ENCODE measurements at regions of chr20 and their contacts with region 1.

Region 1: GRCh38 chr20:53939572-53940359 is 130.6 kb downstream of the BCAS1 start:
- DNase-seq: peak; percentile 92
- H3K27ac ChIP-seq: no peak overlapping the region
- CTCF ChIP-seq: peak; percentile 96

Region 2: DNA sequence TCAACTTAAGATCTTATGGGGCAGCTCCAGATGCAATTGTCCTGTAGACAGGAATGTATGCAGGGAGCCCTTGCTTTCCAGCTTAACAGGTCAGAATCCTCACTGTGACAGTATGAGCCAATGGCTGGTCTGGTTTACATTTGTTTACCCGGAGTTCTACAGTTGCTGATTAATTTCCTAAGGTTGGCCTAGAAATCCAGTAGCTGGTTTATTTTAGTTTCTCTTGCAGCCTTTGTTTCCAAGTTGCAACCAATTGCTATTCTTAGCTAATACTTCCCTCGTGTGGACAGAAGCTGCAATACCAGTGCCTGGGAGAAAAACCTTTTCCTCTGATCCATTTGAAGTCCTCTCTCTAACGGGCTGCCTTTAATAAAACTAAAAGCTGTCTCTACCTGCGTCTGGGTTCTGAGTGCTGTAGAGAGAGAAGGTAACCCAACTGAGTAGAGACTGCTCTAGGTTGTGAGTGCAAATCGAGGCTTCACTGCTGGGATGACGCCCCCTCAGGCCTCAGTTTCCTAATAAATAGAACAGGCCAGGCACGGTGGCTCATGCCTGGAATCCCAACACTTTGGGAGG is 392.0 kb before region 1 on chr20:
- CTCF ChIA-PET with region 1: interaction called, 13 read pairs
- POLR2A ChIA-PET with region 1: interaction called, 4 read pairs
- DNase-seq: peak; percentile 92
- H3K27ac ChIP-seq: no peak overlapping the region
- CTCF ChIP-seq: peak; percentile 96

Region 3: GRCh38 chr20:53578492-53579222 is 361.1 kb before region 1 on chr20:
- CTCF ChIA-PET with region 1: interaction called, 23 read pairs
- POLR2A ChIA-PET with region 1: no interaction called
- DNase-seq: peak; percentile 94
- H3K27ac ChIP-seq: no peak overlapping the region
- CTCF ChIP-seq: peak; percentile 90

Region 4: GRCh38 chr20:53684971-53685797 is 254.6 kb before region 1 on chr20:
- CTCF ChIA-PET with region 1: no interaction called
- POLR2A ChIA-PET with region 1: no interaction called
- DNase-seq: no peak
- H3K27ac ChIP-seq: no peak overlapping the region
- CTCF ChIP-seq: no peak

Region 5: GRCh38 chr20:53926428-53927028 is 13.2 kb before region 1 on chr20:
- CTCF ChIA-PET with region 1: interaction called, 10 read pairs
- POLR2A ChIA-PET with region 1: no interaction called
- DNase-seq: peak; percentile 99
- H3K27ac ChIP-seq: peak overlapping the region; percentile 80
- CTCF ChIP-seq: no peak

Region 6: GRCh38 chr20:54061106-54061881 is 121.5 kb after region 1 on chr20:
- CTCF ChIA-PET with region 1: interaction called, 12 read pairs
- POLR2A ChIA-PET with region 1: no interaction called
- DNase-seq: peak; percentile 73
- H3K27ac ChIP-seq: no peak overlapping the region
- CTCF ChIP-seq: no peak